ENCODE measurements at regions of chr1 and their contacts with region 1.

Region 1: DNA sequence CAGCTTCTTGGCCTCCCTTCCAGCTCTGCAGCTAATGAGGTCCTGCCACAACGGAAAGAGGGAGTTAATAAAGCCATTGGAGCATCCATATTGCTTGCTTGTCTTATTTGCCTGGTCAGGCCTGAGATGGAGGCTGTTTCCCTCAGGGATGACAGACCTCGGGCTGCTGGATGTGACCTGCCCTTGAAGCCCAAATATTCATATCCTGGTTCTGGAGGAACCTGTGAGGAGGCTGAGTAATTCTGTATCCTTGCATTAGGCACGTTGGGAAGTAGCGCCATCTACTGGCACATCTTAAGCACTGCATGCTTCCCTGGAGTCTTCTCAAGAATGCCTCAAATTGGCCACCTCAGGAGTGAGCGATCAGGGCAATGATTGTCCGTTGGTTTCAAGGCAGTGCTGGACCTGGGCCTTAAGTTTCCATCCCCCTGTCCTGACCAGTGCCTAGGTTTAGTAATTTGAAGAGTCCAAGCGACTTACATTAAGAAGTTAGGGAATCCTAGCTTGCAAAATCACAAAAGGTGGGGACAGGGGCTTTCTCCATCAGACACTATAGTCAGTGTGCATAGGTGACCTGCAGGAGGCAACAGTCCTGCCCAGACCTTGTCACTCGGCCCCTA is 13.8 kb upstream of the NASP start:
- DNase-seq: peak in 1 of 2 experiments; percentile 83
- H3K4me3 ChIP-seq: no peak overlapping the region
- H3K27ac ChIP-seq: no peak overlapping the region
- H3K4me1 ChIP-seq: peaks cover 0 to 12% (median 5%) of the 10 kb centered on the region in 4 experiments; a peak in 6 of 7 replicates
- H3K27me3 ChIP-seq: no peaks in the 10 kb centered on the region
- CTCF ChIP-seq: peak; percentile 59 to 96 (median 94)
- EP300 ChIP-seq: no peak
- POLR2A ChIP-seq: peak; percentile 30 to 35; a peak in 1 of 3 replicates
- RAD21 ChIP-seq: peak; percentile 87 to 93

Region 2: GRCh38 chr1:45403298-45403697 is 166.8 kb before region 1 on chr1:
- CTCF ChIA-PET with region 1: no interaction called
- POLR2A ChIA-PET with region 1: no interaction called
- DNase-seq: no peak
- H3K4me3 ChIP-seq: no peak overlapping the region
- H3K27ac ChIP-seq: no peak overlapping the region
- H3K4me1 ChIP-seq: no peaks in the 10 kb centered on the region; a peak in 2 of 7 replicates
- H3K27me3 ChIP-seq: no peaks in the 10 kb centered on the region
- CTCF ChIP-seq: no peak
- EP300 ChIP-seq: no peak
- POLR2A ChIP-seq: no peak
- RAD21 ChIP-seq: no peak

Region 3: DNA sequence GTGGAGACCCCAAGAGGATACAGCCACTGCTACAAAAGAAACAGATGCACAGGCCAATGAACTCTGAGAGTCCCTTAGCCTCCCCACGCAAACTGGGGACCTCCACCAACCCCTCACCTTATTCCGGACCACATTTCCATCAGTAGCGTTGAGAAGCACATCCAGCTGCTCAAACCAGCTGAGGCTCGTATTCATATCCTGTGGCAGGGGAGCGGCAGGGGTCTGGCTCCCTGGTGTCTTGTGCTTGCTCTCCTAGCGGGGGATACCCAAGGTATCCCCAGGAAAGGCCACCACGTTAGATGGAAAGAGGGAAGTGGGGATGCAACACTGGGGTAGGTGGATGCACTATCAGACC is 70.7 kb before region 1 on chr1:
- CTCF ChIA-PET with region 1: interaction called, 7 read pairs
- POLR2A ChIA-PET with region 1: interaction called, 14 read pairs
- DNase-seq: no peak
- H3K4me3 ChIP-seq: peak overlapping the region; percentile 65 to 86 (median 72)
- H3K27ac ChIP-seq: no peak overlapping the region
- H3K4me1 ChIP-seq: peaks cover 0 to 10% (median 3%) of the 10 kb centered on the region in 4 experiments; a peak in 6 of 7 replicates
- H3K27me3 ChIP-seq: no peaks in the 10 kb centered on the region
- CTCF ChIP-seq: no peak
- EP300 ChIP-seq: no peak
- POLR2A ChIP-seq: no peak
- RAD21 ChIP-seq: no peak

Region 4: GRCh38 chr1:45521398-45522323 is 48.4 kb before region 1 on chr1 and contains the start of gene PRDX1:
- CTCF ChIA-PET with region 1: interaction called, 53 read pairs
- POLR2A ChIA-PET with region 1: interaction called, 123 read pairs
- DNase-seq: peak; percentile 91 to 99
- H3K4me3 ChIP-seq: peak within 1 kb of the TSS; percentile 96 to 100 (median 98)
- H3K27ac ChIP-seq: peak within 1 kb of the TSS; percentile 91
- H3K4me1 ChIP-seq: peaks cover 2 to 12% (median 5%) of the 10 kb centered on the region in 4 experiments; a peak in 5 of 7 replicates
- H3K27me3 ChIP-seq: no peaks in the 10 kb centered on the region
- CTCF ChIP-seq: peak in 1 of 3 experiments; percentile 11; a peak in 1 of 4 replicates
- EP300 ChIP-seq: peak in 1 of 2 experiments; percentile 82; a peak in 1 of 3 replicates
- POLR2A ChIP-seq: peak; percentile 100
- RAD21 ChIP-seq: no peak; a peak in 1 of 4 replicates
- total RNA-seq, gene PRDX1: 1,354 and 1,418 TPM in 2 replicates

Region 5: DNA sequence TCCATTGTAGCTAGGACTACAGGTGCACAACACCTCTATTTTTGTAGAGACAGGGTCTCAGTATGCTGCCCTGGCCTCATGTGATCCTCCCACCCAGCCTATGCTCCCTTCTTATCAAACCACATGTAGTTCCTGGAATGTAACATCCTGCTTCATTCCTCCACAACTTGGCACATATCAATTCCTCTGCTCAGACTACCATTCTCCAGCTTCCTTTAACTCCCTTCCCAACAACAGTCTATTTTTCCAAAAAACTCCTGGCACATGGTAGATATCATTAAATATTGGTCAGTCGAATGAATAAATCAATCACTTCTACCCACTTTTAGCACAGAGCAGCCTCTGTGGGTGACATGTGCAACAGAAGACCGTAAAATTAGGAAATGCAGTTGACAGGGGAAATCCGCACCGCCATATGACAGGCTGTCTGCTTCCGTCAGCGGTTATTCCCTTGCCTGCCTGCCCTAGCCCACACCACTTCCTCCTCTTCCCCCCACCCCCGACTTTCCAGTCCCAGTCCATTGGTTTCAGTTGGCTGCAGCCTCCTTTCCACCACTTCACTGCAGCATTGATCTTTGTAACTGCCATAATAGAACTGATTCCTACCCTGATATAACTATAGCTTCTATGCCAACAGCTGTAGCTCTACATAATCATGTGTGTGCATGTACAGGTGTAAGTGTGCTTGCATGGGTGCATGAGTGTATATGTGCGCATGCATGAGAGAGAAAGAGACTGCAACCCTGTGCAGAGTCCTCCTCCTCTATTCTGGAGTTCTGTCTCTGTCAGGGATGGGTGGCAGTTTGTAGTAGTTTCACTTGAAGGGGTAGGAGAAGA is 26.3 kb before region 1 on chr1:
- CTCF ChIA-PET with region 1: interaction called, 10 read pairs
- POLR2A ChIA-PET with region 1: interaction called, 4 read pairs
- DNase-seq: no peak
- H3K4me3 ChIP-seq: no peak overlapping the region
- H3K27ac ChIP-seq: no peak overlapping the region
- H3K4me1 ChIP-seq: peaks cover 0 to 5% (median 2%) of the 10 kb centered on the region in 4 experiments; a peak in 4 of 7 replicates
- H3K27me3 ChIP-seq: no peaks in the 10 kb centered on the region
- CTCF ChIP-seq: no peak
- EP300 ChIP-seq: no peak
- POLR2A ChIP-seq: no peak
- RAD21 ChIP-seq: no peak

Region 6: DNA sequence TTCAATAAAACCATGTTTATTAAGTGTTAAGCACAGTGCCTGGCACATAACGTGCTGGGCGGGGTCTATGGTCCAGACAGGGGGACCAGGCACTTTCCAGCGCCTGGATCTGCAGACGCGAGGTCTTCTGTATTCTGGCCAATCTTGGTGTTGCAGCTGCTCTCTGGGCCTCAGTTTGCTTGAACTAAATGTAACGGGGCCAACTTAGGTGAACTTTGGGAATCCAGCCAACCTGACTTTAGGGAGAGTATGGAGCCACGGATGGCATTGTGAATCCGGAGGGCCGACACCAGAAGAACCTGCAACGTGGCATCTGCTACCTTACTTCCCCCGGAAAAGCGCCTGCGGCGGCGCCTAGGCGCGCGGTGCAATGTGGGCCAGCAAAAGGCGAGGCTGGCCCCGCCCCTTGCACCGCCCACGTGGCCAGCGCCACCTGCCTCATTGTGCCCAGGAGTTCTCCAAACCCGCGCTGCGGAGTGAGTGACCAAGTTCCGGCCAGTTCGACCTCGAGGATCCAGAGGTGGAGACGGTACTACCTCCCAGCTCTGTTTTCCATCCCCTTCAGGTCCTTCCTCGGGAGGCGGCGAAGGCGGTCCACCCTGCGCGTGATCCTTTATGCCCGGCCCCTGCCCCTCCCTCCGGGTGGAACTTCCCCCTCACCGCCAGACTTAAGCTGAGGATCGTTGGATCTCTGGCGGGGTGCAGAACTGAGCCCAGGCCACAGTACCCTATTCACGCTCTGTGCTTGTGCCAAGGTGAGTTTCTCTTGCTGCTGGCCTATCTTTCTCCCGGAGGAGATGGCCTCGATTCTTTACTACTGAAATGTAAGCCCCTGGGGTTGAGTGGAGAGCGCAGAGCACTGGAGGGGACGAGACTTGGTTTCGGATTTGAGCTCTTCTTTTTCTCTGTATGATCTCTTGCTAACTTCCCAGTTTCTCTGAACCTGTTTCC is 19.4 kb before region 1 on chr1 and contains the start of gene AKR1A1:
- CTCF ChIA-PET with region 1: interaction called, 20 read pairs
- POLR2A ChIA-PET with region 1: interaction called, 222 read pairs
- DNase-seq: peak; percentile 78 to 93
- H3K4me3 ChIP-seq: peak within 1 kb of the TSS; percentile 82 to 95 (median 90)
- H3K27ac ChIP-seq: peak within 1 kb of the TSS; percentile 88
- H3K4me1 ChIP-seq: peaks cover 0 to 4% (median 1%) of the 10 kb centered on the region in 4 experiments; a peak in 3 of 7 replicates
- H3K27me3 ChIP-seq: no peaks in the 10 kb centered on the region
- CTCF ChIP-seq: no peak; a peak in 1 of 4 replicates
- EP300 ChIP-seq: peak in 1 of 2 experiments; percentile 10; a peak in 1 of 3 replicates
- POLR2A ChIP-seq: peak; percentile 90 to 99
- RAD21 ChIP-seq: no peak
- total RNA-seq, gene AKR1A1: 334 and 344 TPM in 2 replicates

Region 7: DNA sequence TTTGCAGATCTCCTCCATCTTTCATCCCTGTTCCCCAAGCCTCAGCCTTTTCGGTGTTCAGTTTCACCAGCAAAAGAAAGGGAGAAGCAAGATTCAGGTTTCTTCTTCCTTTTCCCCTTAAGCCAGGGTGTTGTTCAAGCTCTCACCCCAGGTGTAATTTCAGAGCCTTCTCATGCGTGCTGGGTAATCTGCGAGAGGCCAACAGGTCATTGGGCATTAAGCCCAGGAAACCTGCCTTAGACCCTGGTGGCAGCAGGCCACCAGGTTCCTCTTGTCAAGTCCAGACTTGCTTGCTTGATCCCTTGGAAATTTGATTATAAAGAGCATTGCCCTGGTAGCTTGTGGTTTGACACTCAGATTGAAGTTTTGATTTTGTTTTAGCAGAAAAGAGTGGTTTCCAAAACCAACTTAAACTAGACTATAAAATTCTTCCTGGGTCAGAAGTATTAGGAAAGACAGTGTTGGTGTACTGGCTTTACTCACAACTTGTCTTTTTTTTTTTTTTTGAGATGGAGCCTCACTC is 12.6 kb before region 1 on chr1:
- CTCF ChIA-PET with region 1: interaction called, 51 read pairs
- POLR2A ChIA-PET with region 1: interaction called, 222 read pairs
- DNase-seq: no peak
- H3K4me3 ChIP-seq: no peak overlapping the region
- H3K27ac ChIP-seq: peak overlapping the region; percentile 19; the same call in 1 of the 2 replicates
- H3K4me1 ChIP-seq: peaks cover 0 to 1% (median 0%) of the 10 kb centered on the region in 4 experiments; a peak in 3 of 7 replicates
- H3K27me3 ChIP-seq: no peaks in the 10 kb centered on the region
- CTCF ChIP-seq: no peak
- EP300 ChIP-seq: no peak
- POLR2A ChIP-seq: no peak
- RAD21 ChIP-seq: no peak

Measured in H1 (cell line).